ENCODE measurements at regions of chr6 and their contacts with region 1.

Region 1: GRCh38 chr6:18503593-18504231 is 116.6 kb downstream of the RNF144B start:
- DNase-seq: peak; percentile 39 to 73 (median 48)
- ATAC-seq: peak; percentile 89
- H3K4me3 ChIP-seq: 0 out of 2 replicates have a peak overlapping the region, but pooled peaks have one; percentile 5
- H3K27ac ChIP-seq: no peak overlapping the region
- H3K4me1 ChIP-seq: peaks cover 0 to 6% of the 10 kb centered on the region in 2 experiments; a peak in 1 of 5 replicates
- H3K27me3 ChIP-seq: peaks cover 0 to 2% of the 10 kb centered on the region in 2 experiments; a peak in 1 of 5 replicates
- CTCF ChIP-seq: peak; percentile 89 to 95 (median 89)
- EP300 ChIP-seq: no peak
- POLR2A ChIP-seq: no peak
- RAD21 ChIP-seq: peak; percentile 97

Region 2: GRCh38 chr6:17156112-17156921 is 1347.4 kb before region 1 on chr6:
- CTCF ChIA-PET with region 1: interaction called, 3 read pairs
- POLR2A ChIA-PET with region 1: no interaction called
- in situ Hi-C with region 1: no loop called
- intact Hi-C with region 1: loop called (anchors 5 kb)
- DNase-seq: peak; percentile 57 to 81 (median 62)
- ATAC-seq: peak; percentile 87
- H3K4me3 ChIP-seq: no peak overlapping the region
- H3K27ac ChIP-seq: no peak overlapping the region
- H3K4me1 ChIP-seq: no peaks in the 10 kb centered on the region
- H3K27me3 ChIP-seq: no peaks in the 10 kb centered on the region
- CTCF ChIP-seq: peak; percentile 55 to 86 (median 72); a peak in 5 of 6 replicates
- EP300 ChIP-seq: no peak
- POLR2A ChIP-seq: no peak
- RAD21 ChIP-seq: peak; percentile 96 to 97

Region 3: DNA sequence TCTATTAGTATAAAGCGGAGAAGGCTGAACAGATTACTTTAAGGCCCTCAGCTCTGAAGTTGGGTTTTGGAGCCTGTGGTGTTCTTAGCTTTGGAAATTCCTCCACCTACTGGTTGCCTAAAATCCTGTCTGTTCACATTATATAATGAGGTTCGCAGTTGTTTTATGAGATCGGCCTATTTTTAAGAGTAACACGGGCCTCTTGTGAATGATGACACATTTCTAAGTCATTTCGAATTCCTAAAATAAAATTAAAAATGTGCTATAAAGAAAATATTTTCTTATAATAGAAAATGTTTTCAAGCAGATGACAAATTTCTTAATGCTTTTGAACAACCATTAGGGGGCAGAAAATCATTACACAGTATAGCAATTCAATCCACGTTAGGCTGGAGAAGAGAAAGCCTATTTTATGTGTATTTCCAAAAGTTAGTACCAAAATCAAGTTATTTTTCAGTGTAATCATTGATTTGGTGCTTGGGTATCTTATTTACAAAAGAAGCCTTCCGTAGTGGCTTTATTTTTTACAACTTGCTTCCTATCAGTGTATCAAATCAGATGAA is 919.4 kb before region 1 on chr6:
- CTCF ChIA-PET with region 1: interaction called, 16 read pairs
- POLR2A ChIA-PET with region 1: no interaction called
- in situ Hi-C with region 1: no loop called
- intact Hi-C with region 1: loop called (anchors 5 kb)
- DNase-seq: peak; percentile 45 to 69 (median 59)
- ATAC-seq: peak; percentile 93
- H3K4me3 ChIP-seq: no peak overlapping the region
- H3K27ac ChIP-seq: no peak overlapping the region
- H3K4me1 ChIP-seq: no peaks in the 10 kb centered on the region; a peak in 1 of 5 replicates
- H3K27me3 ChIP-seq: no peaks in the 10 kb centered on the region
- CTCF ChIP-seq: peak; percentile 88 to 96 (median 91)
- EP300 ChIP-seq: peak; percentile 16; the same call in 1 of the 2 replicates
- POLR2A ChIP-seq: no peak
- RAD21 ChIP-seq: peak; percentile 95 to 99

Region 4: DNA sequence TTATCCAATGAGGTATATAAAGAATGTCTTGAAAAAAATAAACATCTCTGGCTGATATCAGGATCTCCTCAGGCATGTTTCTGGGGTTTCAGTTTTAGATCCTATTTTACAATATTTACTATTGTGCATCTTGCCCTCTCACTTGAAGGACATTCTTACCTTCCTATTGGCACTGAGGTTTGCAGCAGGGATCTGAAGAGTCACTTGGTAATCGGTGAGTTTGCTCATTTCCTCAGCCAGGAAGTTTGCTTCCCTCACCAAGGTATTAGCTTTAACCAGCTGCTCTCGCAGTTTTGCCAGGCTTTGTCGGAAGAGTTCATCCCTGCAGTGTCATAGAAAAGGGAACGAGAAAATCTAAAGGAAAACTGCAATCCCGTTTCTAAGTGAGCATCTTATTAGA is 695.1 kb before region 1 on chr6:
- CTCF ChIA-PET with region 1: no interaction called
- POLR2A ChIA-PET with region 1: no interaction called
- in situ Hi-C with region 1: no loop called
- intact Hi-C with region 1: loop called (anchors 10 kb)
- DNase-seq: no peak
- ATAC-seq: no peak
- H3K4me3 ChIP-seq: no peak overlapping the region
- H3K27ac ChIP-seq: no peak overlapping the region
- H3K4me1 ChIP-seq: no peaks in the 10 kb centered on the region
- H3K27me3 ChIP-seq: no peaks in the 10 kb centered on the region
- CTCF ChIP-seq: no peak
- EP300 ChIP-seq: no peak
- POLR2A ChIP-seq: no peak
- RAD21 ChIP-seq: no peak

Region 5: GRCh38 chr6:18122124-18123093 is 381.3 kb before region 1 on chr6 and contains the start of gene NHLRC1:
- CTCF ChIA-PET with region 1: no interaction called
- POLR2A ChIA-PET with region 1: no interaction called
- in situ Hi-C with region 1: no loop called
- intact Hi-C with region 1: loop called (anchors 2 kb)
- DNase-seq: no peak
- ATAC-seq: 0 out of 3 replicates have a peak, but pooled peaks have one; percentile 16
- H3K4me3 ChIP-seq: no peak within 1 kb of the TSS
- H3K27ac ChIP-seq: no peak within 1 kb of the TSS
- H3K4me1 ChIP-seq: peaks cover 3 to 8% of the 10 kb centered on the region in 2 experiments; a peak in 2 of 5 replicates
- H3K27me3 ChIP-seq: no peaks in the 10 kb centered on the region
- CTCF ChIP-seq: peak; percentile 15 to 26 (median 24); a peak in 2 of 6 replicates
- EP300 ChIP-seq: no peak
- POLR2A ChIP-seq: no peak
- RAD21 ChIP-seq: peak in 1 of 2 experiments; percentile 38; a peak in 2 of 4 replicates
- polyA plus RNA-seq, gene NHLRC1: not detected

Region 6: DNA sequence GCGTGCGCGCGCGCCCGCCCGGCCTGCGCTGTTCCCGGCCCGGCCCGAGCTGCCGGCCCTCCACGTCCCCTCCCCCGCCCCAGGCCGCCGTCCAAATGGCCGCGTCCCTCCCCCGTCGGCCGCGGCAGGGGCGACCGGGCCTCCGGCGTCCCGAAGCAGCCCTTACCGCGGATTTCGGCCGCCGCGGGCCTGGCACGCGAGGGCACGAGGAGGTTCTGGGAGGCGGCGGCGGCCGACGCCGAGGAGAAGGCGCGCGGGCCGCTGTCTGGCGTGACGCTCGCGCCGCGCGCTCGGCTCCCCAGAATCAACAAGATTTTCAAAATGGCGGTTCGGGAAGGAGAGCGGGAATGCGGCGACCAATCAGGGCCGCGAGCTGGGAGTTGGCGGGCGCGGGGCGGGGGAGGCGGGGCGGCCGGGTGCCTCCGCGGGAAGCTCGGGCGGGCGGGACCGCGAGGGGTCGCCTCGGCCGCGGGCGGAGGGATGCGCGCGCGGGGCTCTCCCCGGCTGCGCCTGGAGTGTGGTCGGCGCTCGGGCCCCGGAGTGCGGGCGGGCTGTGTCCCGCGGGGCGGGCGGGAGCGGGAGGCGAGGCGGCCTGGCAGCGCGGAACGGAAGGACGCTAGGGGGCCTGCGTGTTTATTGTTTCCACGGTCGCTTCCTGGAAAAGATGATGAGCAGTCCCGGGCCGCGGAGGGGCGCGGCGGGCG is 239.3 kb before region 1 on chr6 and contains the start of gene DEK:
- CTCF ChIA-PET with region 1: interaction called, 3 read pairs
- POLR2A ChIA-PET with region 1: no interaction called
- in situ Hi-C with region 1: no loop called
- intact Hi-C with region 1: loop called (anchors 1 kb)
- DNase-seq: peak; percentile 95 to 97 (median 96)
- ATAC-seq: peak; percentile 89
- H3K4me3 ChIP-seq: peak within 1 kb of the TSS; percentile 92
- H3K27ac ChIP-seq: peak within 1 kb of the TSS; percentile 97
- H3K4me1 ChIP-seq: peaks cover 21 to 36% of the 10 kb centered on the region in 2 experiments
- H3K27me3 ChIP-seq: no peaks in the 10 kb centered on the region
- CTCF ChIP-seq: peak; percentile 63 to 84 (median 76)
- EP300 ChIP-seq: no peak; the same call in 1 of the 2 replicates
- POLR2A ChIP-seq: peak; percentile 66; the same call in 1 of the 2 replicates
- RAD21 ChIP-seq: peak; percentile 60 to 61
- polyA plus RNA-seq, gene DEK: 82.3 to 87.3 TPM

Region 7: DNA sequence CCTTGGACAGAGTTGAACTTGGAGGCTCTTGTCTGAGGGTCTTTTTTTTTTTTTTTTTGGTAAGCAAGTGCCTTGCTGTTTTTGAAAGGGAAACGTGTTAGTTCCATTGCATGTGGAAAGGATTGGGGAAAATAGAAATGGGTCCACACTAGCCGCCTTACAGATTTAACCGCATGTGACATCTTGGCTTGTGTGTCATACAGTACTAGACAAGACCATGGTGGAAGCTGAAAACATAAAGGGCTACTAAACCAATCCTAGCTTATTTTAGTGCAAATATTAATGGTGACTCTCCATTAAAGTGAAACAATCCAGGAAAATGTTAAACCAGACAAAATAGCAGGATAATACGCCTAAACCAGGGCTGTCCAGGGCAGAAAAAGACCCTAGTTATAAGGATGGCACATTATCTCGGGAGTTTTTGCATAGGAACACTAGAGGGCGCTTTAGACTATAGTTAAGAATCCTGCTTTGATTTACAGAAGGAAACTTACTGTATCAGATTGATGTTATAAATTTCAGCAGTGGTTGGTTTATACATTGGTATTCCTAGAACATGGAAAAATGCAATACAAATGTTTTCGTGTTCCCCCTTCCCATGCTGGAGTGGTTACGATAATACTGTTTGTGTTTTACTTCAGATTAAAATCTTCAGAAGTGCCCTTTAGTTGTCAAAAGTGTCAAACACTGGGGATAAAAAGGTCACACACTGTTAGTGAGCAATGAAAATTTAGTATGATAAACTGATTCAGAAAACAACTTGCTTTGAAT is 179.6 kb before region 1 on chr6:
- CTCF ChIA-PET with region 1: interaction called, 22 read pairs
- POLR2A ChIA-PET with region 1: interaction called, 4 read pairs
- in situ Hi-C with region 1: no loop called
- intact Hi-C with region 1: loop called (anchors 1 kb)
- DNase-seq: peak; percentile 42 to 60 (median 56)
- ATAC-seq: peak; percentile 82
- H3K4me3 ChIP-seq: no peak overlapping the region
- H3K27ac ChIP-seq: no peak overlapping the region
- H3K4me1 ChIP-seq: no peaks in the 10 kb centered on the region
- H3K27me3 ChIP-seq: peaks cover 5 to 10% of the 10 kb centered on the region in 2 experiments; a peak in 2 of 5 replicates
- CTCF ChIP-seq: peak; percentile 60 to 85 (median 79); a peak in 5 of 6 replicates
- EP300 ChIP-seq: no peak
- POLR2A ChIP-seq: no peak
- RAD21 ChIP-seq: peak; percentile 79 to 87

Region 8: GRCh38 chr6:18363749-18364148 is 140.0 kb before region 1 on chr6:
- CTCF ChIA-PET with region 1: no interaction called
- POLR2A ChIA-PET with region 1: no interaction called
- in situ Hi-C with region 1: no loop called
- intact Hi-C with region 1: no loop called
- DNase-seq: no peak
- ATAC-seq: no peak
- H3K4me3 ChIP-seq: no peak overlapping the region
- H3K27ac ChIP-seq: no peak overlapping the region
- H3K4me1 ChIP-seq: peaks cover 0 to 7% of the 10 kb centered on the region in 2 experiments; a peak in 2 of 5 replicates
- H3K27me3 ChIP-seq: peaks cover 0 to 16% of the 10 kb centered on the region in 2 experiments; a peak in 2 of 5 replicates
- CTCF ChIP-seq: no peak
- EP300 ChIP-seq: no peak
- POLR2A ChIP-seq: no peak
- RAD21 ChIP-seq: no peak